Activated CD8-positive, alpha-beta memory T cell treated with anti-CD3 and anti-CD28 coated beads, Interleukin-2, amount 10 ng/mL, durations not matched to agents 7 days and 5 days (primary cell): ENCODE measurements at regions of chr2 and their contacts with region 1.

Region 1: DNA sequence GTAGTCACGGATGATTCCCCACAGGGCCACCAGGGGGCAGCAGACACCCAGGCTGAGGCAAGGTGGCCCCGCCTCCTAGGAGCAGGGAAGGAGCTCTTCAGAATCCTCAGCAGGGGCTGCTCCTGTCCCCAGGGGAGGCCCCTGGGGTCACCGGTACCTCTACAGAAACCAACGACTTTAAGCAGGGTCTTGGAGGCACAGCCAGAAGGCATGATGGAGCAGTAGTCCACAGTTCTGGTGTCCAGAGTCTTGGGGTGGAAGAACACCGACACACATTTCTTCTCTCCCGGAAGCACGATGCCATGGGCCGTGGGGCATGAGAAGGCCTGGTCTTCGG is 11.5 kb downstream of the CFAP65 start:
- DNase-seq: peak; percentile 78
- ATAC-seq: peak; percentile 88
- H3K4me3 Mint-ChIP-seq: no peak overlapping the region
- H3K27ac Mint-ChIP-seq: no peak overlapping the region
- H3K4me1 Mint-ChIP-seq: no peaks in the 10 kb centered on the region
- H3K27me3 Mint-ChIP-seq: peaks cover 25% of the 10 kb centered on the region

Region 2: DNA sequence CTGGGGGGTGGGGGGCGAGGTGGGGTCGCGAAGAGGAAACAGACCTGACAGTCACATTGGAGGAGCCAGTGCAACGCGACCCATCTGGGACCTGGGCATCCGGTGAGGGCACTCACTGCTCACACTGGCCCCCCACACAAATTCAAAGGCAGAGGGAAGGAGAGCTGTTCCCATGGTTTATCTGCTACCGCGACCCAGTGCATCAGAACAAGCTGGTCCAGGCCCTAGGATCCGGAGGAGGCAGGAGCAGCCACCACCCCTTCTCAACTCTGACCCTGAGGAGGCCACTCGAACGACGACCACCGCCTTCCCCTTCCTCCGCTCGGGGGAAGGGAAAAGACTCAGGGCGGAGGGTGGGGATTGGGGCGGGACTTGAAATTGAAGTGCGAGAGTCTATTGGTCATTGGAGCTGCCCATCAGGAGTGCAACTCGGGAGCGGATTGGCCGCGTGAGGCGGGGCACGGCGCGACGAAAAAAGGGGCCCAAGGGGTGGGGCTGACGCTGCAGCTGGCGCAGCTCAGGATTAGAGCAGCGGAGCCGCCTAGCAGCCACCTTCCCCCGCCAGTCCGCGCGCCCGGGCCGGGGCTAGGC is 70.6 kb before region 1 on chr2 and contains the start of gene CDK5R2:
- CTCF ChIA-PET with region 1: no interaction called
- DNase-seq: peak; percentile 87
- ATAC-seq: peak; percentile 98
- H3K4me3 Mint-ChIP-seq: peak within 1 kb of the TSS; percentile 59
- H3K27ac Mint-ChIP-seq: no peak within 1 kb of the TSS
- H3K4me1 Mint-ChIP-seq: peaks cover 12% of the 10 kb centered on the region
- H3K27me3 Mint-ChIP-seq: peaks cover 79% of the 10 kb centered on the region
- total RNA-seq, gene CDK5R2: not detected

Region 3: DNA sequence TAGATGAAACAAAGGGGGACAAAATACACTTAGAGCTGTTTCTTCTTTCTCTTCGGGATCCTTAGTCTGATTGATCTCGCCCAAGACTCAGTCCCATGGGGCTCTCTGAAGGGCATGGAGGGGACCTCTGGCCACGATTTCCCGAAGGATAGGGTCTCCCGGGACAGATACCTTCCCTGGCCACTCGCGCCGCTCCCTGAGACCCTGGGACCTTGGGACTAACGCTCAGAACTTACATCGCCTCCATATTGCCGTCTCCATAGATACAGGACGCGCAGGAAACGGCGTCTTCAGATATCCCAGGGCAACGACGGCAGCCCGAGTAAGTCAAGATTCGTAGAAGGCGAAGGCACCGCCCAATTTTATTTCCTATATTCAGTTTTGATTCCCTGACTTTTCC is 11.5 kb after region 1 on chr2 and contains the start of gene CFAP65:
- CTCF ChIA-PET with region 1: interaction called, 34 read pairs
- DNase-seq: no peak
- ATAC-seq: no peak
- H3K4me3 Mint-ChIP-seq: no peak within 1 kb of the TSS
- H3K27ac Mint-ChIP-seq: no peak within 1 kb of the TSS
- H3K4me1 Mint-ChIP-seq: peaks cover 4% of the 10 kb centered on the region
- H3K27me3 Mint-ChIP-seq: peaks cover 62% of the 10 kb centered on the region
- total RNA-seq, gene CFAP65: not detected

Region 4: GRCh38 chr2:219155054-219155644 is 125.4 kb after region 1 on chr2:
- CTCF ChIA-PET with region 1: interaction called, 31 read pairs
- DNase-seq: no peak
- ATAC-seq: no peak
- H3K4me3 Mint-ChIP-seq: no peak overlapping the region
- H3K27ac Mint-ChIP-seq: no peak overlapping the region
- H3K4me1 Mint-ChIP-seq: peaks cover 9% of the 10 kb centered on the region
- H3K27me3 Mint-ChIP-seq: no peaks in the 10 kb centered on the region